ENCODE measurements at regions of chr1 and their contacts with region 1.

Region 1: GRCh38 chr1:223142795-223143536 is at the start of gene TLR5:
- DNase-seq: peak; percentile 88
- ATAC-seq: peak; percentile 94 to 97
- total RNA-seq, gene TLR5: 3.5 to 6.5 TPM

Region 2: DNA sequence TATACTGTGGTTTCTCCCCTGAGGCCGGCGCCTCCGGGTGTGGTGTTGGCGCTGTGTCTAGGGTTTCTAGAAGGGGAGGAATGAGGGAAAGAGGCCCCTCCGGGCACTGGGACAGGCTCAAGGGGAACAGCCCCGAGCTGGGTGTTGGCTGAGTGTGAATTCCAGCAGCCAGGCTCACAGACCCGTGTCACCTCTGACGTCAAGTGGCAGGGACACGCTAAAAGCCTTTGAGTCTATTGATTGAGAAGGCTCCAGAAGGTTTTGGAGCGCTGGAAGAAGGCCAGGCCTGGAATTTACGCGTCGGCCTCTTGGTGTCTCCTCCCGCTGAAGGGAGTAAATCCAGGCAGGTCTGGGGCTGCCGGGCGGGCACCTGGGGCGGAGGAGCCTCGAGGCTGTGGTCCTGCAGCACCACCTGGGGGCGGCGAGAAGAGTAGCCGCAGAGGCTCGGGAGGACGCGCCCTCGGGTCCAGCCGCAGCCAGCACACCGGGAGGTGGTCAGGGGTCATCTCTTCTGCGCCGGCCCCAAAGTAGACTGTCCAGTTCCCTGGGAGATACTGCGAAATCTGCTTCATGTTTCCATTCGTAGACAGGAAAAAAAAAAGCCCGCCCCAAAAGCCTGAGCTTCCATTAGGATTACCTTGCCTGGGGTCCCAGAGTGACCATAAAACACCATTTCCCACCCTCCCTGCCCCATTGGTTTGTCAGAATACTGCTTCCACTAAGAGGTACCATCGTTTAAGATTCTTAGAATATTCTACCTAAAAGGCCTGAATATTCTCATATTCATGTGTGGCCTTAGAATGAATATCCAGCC is 61.6 kb before region 1 on chr1:
- intact Hi-C with region 1: no loop called
- DNase-seq: peak; percentile 89
- ATAC-seq: peak; percentile 95

Region 3: GRCh38 chr1:223207293-223208066 is 64.5 kb after region 1 on chr1:
- intact Hi-C with region 1: loop called in 1 of 2 experiments (anchors 10 kb)
- DNase-seq: no peak
- ATAC-seq: peak in 1 of 2 donors; percentile 38

Measured in left cardiac atrium (tissue), 4 donors.